G401 (cell line): ENCODE measurements at regions of chr16 and their contacts with region 1.

Region 1: GRCh38 chr16:67480833-67481560 is at the start of gene ATP6V0D1:
- DNase-seq: peak; percentile 97
- total RNA-seq, gene ATP6V0D1: 91.8 and 119 TPM in 2 replicates

Region 2: GRCh38 chr16:67447508-67448076 is 33.4 kb before region 1 on chr16:
- in situ Hi-C with region 1: loop called (anchors 5 kb)
- DNase-seq: no peak